ENCODE measurements at regions of chr3 and their contacts with region 1.

Region 1: GRCh38 chr3:99833617-99834205 is 16.0 kb downstream of the CMSS1 start:
- DNase-seq: no peak
- H3K4me3 Mint-ChIP-seq: no peak overlapping the region
- H3K27ac Mint-ChIP-seq: no peak overlapping the region
- H3K4me1 Mint-ChIP-seq: no peaks in the 10 kb centered on the region
- H3K27me3 Mint-ChIP-seq: no peaks in the 10 kb centered on the region
- CTCF ChIP-seq: no peak

Region 2: GRCh38 chr3:100006570-100007271 is 173.0 kb after region 1 on chr3:
- CTCF ChIA-PET with region 1: interaction called, 10 read pairs
- intact Hi-C with region 1: no loop called
- DNase-seq: no peak
- H3K4me3 Mint-ChIP-seq: no peak overlapping the region
- H3K27ac Mint-ChIP-seq: peak overlapping the region; percentile 62
- H3K4me1 Mint-ChIP-seq: peaks cover 72% of the 10 kb centered on the region
- H3K27me3 Mint-ChIP-seq: no peaks in the 10 kb centered on the region
- CTCF ChIP-seq: no peak

Region 3: DNA sequence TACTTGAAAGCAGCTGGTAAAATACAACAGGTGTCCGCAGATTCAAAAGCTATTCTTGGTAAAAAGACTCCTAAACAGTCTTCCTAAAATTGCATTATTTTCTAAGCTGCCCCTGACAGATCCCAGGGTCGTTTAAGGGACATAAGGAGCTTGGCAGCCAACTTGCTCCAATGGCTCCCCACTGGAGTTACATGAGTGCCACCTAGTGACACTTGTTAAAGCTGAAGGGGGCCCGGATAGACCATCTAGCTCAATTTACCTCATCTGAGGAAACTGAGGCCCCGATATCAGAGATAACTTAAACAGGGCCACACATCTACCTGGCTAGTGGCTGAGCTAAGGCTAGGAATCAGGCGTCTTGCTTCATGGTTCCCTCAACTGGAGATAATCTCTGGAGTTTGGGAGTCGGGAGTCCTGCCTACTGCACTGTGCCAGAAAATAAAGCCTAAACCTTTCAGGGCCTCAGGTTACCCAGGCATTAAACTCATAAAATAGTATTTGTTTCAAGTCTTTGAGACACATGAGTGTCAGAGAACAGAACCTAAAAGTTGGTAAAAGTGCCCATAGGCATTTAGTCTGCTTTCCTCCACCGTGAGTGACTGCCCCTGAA is 420.6 kb after region 1 on chr3:
- CTCF ChIA-PET with region 1: interaction called, 51 read pairs
- intact Hi-C with region 1: loop called (anchors 2 kb)
- DNase-seq: peak; percentile 63
- H3K4me3 Mint-ChIP-seq: no peak overlapping the region
- H3K27ac Mint-ChIP-seq: no peak overlapping the region
- H3K4me1 Mint-ChIP-seq: no peaks in the 10 kb centered on the region
- H3K27me3 Mint-ChIP-seq: no peaks in the 10 kb centered on the region
- CTCF ChIP-seq: peak; percentile 72